ENCODE measurements at regions of chr9 and their contacts with region 1.

Region 1: GRCh38 chr9:78601957-78602565 is 305.1 kb downstream of the PSAT1 start:
- DNase-seq: no peak
- ATAC-seq: peak; percentile 65 to 73 (median 68)
- H3K4me3 ChIP-seq: no peak overlapping the region
- H3K27ac ChIP-seq: no peak overlapping the region
- H3K4me1 ChIP-seq: no peaks in the 10 kb centered on the region
- H3K27me3 ChIP-seq: peaks cover 0 to 5% of the 10 kb centered on the region in 2 donors
- CTCF ChIP-seq: peak; percentile 63 to 71 (median 68)
- POLR2A ChIP-seq: no peak

Region 2: DNA sequence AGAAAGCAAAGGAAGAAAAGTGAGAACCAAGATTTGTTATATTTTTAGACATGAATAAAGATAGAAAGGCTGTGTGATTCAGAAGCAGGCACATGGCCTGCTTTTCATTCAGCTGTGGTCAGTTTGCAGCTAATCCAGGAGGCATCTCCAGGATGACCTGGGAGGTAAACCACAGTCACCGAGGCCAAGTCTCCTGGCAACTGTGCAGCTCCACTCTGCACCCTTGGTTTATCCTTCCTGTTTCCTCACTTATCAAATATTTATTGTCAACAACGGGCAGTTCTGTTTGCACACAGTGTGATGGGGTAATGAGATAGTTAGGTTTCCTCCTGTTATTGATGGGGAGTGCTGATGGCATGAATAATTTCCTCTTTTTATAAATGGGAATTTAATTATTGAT is 62.2 kb before region 1 on chr9:
- intact Hi-C with region 1: loop called in 1 of 2 experiments (anchors 10 kb)
- DNase-seq: peak; percentile 69 to 85 (median 69)
- ATAC-seq: peak; percentile 99
- H3K4me3 ChIP-seq: no peak overlapping the region
- H3K27ac ChIP-seq: no peak overlapping the region
- H3K4me1 ChIP-seq: peaks cover 0 to 12% (median 6%) of the 10 kb centered on the region in 4 donors
- H3K27me3 ChIP-seq: no peaks in the 10 kb centered on the region
- CTCF ChIP-seq: no peak
- POLR2A ChIP-seq: no peak

Region 3: DNA sequence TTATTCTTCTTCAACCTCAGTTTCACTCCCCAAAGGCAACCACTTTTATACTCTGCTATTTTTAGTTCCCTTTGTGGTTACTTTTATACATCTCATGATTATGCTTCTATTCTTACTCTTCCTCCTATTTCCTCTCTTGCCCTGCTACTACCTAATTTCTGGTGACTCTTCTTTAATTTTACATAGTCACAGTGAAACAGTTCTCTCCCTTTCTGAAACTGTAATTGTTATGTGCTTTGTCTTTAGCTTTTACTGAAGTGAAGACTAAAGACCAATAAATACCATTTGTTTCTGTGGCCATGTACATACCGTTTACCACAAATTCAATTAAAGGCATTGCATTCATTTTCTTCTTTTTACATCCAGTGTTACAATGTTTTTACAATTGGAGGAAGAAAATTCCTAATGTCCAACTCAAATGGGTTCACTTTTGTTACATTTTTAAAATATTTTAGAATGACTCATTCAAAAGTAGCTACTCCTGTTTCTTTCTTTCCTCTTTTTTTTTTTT is 105.5 kb after region 1 on chr9:
- intact Hi-C with region 1: no loop called
- DNase-seq: no peak
- ATAC-seq: peak in 1 of 4 donors; percentile 22
- H3K4me3 ChIP-seq: no peak overlapping the region
- H3K27ac ChIP-seq: no peak overlapping the region
- H3K4me1 ChIP-seq: no peaks in the 10 kb centered on the region
- H3K27me3 ChIP-seq: no peaks in the 10 kb centered on the region
- CTCF ChIP-seq: no peak
- POLR2A ChIP-seq: no peak